Psoas muscle (tissue), 8 donors: ENCODE measurements at regions of chr2 and their contacts with region 1.

Region 1: GRCh38 chr2:21317131-21317530 is 193.4 kb downstream of the TDRD15 start:
- DNase-seq: peak; percentile 18 to 42
- ATAC-seq: peak in 1 of 4 donors; percentile 49
- H3K4me3 ChIP-seq: no peak overlapping the region
- H3K27ac ChIP-seq: no peak overlapping the region
- H3K4me1 ChIP-seq: no peaks in the 10 kb centered on the region
- H3K27me3 ChIP-seq: no peaks in the 10 kb centered on the region
- CTCF ChIP-seq: peak; percentile 53

Region 2: DNA sequence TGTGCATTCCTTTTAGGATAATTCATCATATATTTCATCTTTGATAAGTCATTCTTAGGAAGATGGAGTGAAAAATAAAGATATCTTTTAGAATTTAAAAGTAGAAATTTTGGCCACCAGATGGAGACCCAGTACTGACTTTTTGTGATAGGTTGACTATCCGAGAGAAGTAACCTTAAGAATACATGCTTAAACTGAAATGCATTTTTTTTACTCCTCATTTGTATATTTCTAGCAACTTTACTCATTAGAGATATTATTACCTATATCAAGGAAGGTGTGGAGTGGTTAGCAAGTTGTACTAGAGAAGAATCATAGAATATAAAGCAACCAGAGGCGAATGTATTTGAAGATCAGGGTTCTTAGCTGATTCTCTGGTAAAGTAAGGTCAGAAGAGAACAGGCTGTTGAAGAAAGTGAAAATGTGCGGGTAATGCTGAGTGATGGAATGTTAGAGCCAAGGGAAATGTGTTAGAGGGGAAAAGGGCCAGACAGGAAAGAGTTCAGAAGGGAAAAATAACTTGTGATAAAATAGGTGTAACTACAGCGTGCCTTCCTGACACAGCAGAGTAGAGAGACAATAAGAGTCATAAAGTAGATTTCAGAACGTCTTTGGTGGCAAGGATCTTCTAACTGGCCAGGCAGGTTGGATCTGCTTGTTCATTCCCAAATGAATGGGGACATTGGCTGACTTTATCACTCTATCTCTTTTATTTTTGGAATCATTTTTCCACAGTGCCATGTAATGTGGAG is 141.1 kb before region 1 on chr2:
- intact Hi-C with region 1: loop called (anchors 2 to 10 kb)
- DNase-seq: no peak
- ATAC-seq: no peak
- H3K4me3 ChIP-seq: no peak overlapping the region
- H3K27ac ChIP-seq: no peak overlapping the region
- H3K4me1 ChIP-seq: no peaks in the 10 kb centered on the region
- H3K27me3 ChIP-seq: no peaks in the 10 kb centered on the region
- CTCF ChIP-seq: peak; percentile 28